ENCODE measurements at regions of chr22 and their contacts with region 1.

Region 1: GRCh38 chr22:33529424-33530113 is 390.7 kb downstream of the LARGE1 start:
- DNase-seq: no peak
- H3K4me3 ChIP-seq: no peak overlapping the region
- H3K27ac ChIP-seq: no peak overlapping the region
- H3K4me1 ChIP-seq: no peaks in the 10 kb centered on the region
- H3K27me3 ChIP-seq: no peaks in the 10 kb centered on the region
- CTCF ChIP-seq: no peak
- POLR2A ChIP-seq: no peak

Region 2: GRCh38 chr22:33467620-33468095 is 61.9 kb before region 1 on chr22:
- intact Hi-C with region 1: no loop called
- DNase-seq: no peak
- H3K4me3 ChIP-seq: no peak overlapping the region
- H3K27ac ChIP-seq: no peak overlapping the region
- H3K4me1 ChIP-seq: no peaks in the 10 kb centered on the region
- H3K27me3 ChIP-seq: no peaks in the 10 kb centered on the region
- CTCF ChIP-seq: no peak
- POLR2A ChIP-seq: no peak

Region 3: GRCh38 chr22:33579448-33580093 is 50.0 kb after region 1 on chr22:
- intact Hi-C with region 1: loop called (anchors 5 kb)
- DNase-seq: peak; percentile 50
- H3K4me3 ChIP-seq: no peak overlapping the region
- H3K27ac ChIP-seq: no peak overlapping the region
- H3K4me1 ChIP-seq: no peaks in the 10 kb centered on the region
- H3K27me3 ChIP-seq: no peaks in the 10 kb centered on the region
- CTCF ChIP-seq: peak; percentile 52 to 83 (median 82)
- POLR2A ChIP-seq: no peak

Region 4: DNA sequence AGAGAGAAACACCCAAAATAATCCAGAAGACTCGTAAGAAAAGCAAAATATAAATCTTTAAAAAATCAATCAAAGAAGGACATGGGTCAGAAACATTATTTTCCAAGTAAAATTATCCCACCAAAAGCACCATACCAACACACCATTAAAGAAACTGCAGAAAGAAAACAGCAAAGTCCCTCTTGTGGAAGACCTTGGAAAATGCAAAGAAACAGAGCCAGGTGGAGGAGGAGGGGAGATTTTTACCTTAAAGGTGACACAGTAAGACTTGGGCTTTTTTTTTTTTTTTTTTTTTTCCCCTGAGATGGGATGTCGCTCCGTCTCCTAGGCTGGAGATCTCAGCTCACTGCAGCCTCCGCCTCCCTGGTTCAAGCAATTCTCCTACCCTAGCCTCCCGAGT is 266.9 kb after region 1 on chr22:
- intact Hi-C with region 1: loop called (anchors 10 kb)
- DNase-seq: no peak
- H3K4me3 ChIP-seq: no peak overlapping the region
- H3K27ac ChIP-seq: no peak overlapping the region
- H3K4me1 ChIP-seq: no peaks in the 10 kb centered on the region
- H3K27me3 ChIP-seq: no peaks in the 10 kb centered on the region
- CTCF ChIP-seq: no peak
- POLR2A ChIP-seq: no peak

Region 5: DNA sequence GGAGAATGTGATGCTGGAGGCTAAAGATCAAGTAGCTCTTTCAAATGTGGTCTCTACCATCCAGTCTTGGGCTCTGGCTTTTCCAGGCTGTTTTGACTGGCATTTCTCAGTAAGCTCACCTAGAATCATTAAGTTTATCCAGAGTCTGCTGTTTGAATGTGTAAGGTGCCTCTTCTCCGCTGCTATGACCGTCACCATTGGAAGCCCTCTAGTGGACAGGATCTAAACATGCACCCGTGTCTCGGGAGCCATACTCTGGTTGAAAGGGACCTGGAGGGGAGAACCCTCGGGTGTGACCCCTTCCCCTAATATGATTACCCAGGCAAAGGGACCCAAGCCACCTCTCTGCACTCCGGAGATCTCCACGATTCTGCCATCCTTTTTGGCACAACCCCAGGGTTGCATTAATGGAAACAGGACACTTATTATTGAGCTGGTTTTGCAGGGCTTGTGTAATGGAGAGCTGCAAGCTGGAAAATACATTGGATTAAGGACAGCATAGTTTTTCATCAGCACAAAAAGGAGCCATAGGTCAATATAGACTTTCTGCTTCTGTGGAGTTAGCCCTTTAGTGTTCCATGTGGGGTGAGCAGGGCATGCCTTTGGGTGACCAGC is 581.7 kb after region 1 on chr22:
- intact Hi-C with region 1: loop called (anchors 10 kb)
- DNase-seq: no peak
- H3K4me3 ChIP-seq: no peak overlapping the region
- H3K27ac ChIP-seq: no peak overlapping the region
- H3K4me1 ChIP-seq: no peaks in the 10 kb centered on the region
- H3K27me3 ChIP-seq: no peaks in the 10 kb centered on the region
- CTCF ChIP-seq: peak; percentile 23 to 56 (median 46)
- POLR2A ChIP-seq: no peak

Measured in prostate gland (tissue), 2 donors.